ENCODE measurements at regions of chr10 and their contacts with region 1.

Region 1: GRCh38 chr10:84537447-84537931 is 209.1 kb downstream of the CCSER2 start:
- DNase-seq: peak; percentile 68
- H3K4me3 Mint-ChIP-seq: no peak overlapping the region
- H3K27ac Mint-ChIP-seq: no peak overlapping the region
- H3K4me1 Mint-ChIP-seq: peaks cover 25% of the 10 kb centered on the region
- H3K27me3 Mint-ChIP-seq: no peaks in the 10 kb centered on the region
- CTCF ChIP-seq: peak; percentile 70

Region 2: GRCh38 chr10:83917537-83918506 is 619.7 kb before region 1 on chr10:
- CTCF ChIA-PET with region 1: no interaction called
- POLR2A ChIA-PET with region 1: no interaction called
- intact Hi-C with region 1: no loop called
- DNase-seq: no peak
- H3K4me3 Mint-ChIP-seq: no peak overlapping the region
- H3K27ac Mint-ChIP-seq: no peak overlapping the region
- H3K4me1 Mint-ChIP-seq: no peaks in the 10 kb centered on the region
- H3K27me3 Mint-ChIP-seq: no peaks in the 10 kb centered on the region
- CTCF ChIP-seq: no peak

Region 3: GRCh38 chr10:84352251-84352842 is 185.1 kb before region 1 on chr10:
- CTCF ChIA-PET with region 1: interaction called, 40 read pairs
- POLR2A ChIA-PET with region 1: interaction called, 3 read pairs
- intact Hi-C with region 1: loop called (anchors 1 kb)
- DNase-seq: peak; percentile 77
- H3K4me3 Mint-ChIP-seq: no peak overlapping the region
- H3K27ac Mint-ChIP-seq: no peak overlapping the region
- H3K4me1 Mint-ChIP-seq: peaks cover 32% of the 10 kb centered on the region
- H3K27me3 Mint-ChIP-seq: no peaks in the 10 kb centered on the region
- CTCF ChIP-seq: peak; percentile 67

Region 4: GRCh38 chr10:84392181-84392580 is 145.3 kb before region 1 on chr10:
- CTCF ChIA-PET with region 1: interaction called, 17 read pairs
- POLR2A ChIA-PET with region 1: no interaction called
- intact Hi-C with region 1: no loop called
- DNase-seq: no peak
- H3K4me3 Mint-ChIP-seq: no peak overlapping the region
- H3K27ac Mint-ChIP-seq: no peak overlapping the region
- H3K4me1 Mint-ChIP-seq: peaks cover 16% of the 10 kb centered on the region
- H3K27me3 Mint-ChIP-seq: no peaks in the 10 kb centered on the region
- CTCF ChIP-seq: no peak

Region 5: GRCh38 chr10:84510121-84510520 is 27.4 kb before region 1 on chr10:
- CTCF ChIA-PET with region 1: interaction called, 10 read pairs
- POLR2A ChIA-PET with region 1: no interaction called
- intact Hi-C with region 1: no loop called
- DNase-seq: peak; percentile 8
- H3K4me3 Mint-ChIP-seq: no peak overlapping the region
- H3K27ac Mint-ChIP-seq: peak overlapping the region; percentile 4
- H3K4me1 Mint-ChIP-seq: peaks cover 10% of the 10 kb centered on the region
- H3K27me3 Mint-ChIP-seq: no peaks in the 10 kb centered on the region
- CTCF ChIP-seq: no peak

Region 6: GRCh38 chr10:84715911-84716310 is 178.4 kb after region 1 on chr10:
- CTCF ChIA-PET with region 1: interaction called, 5 read pairs
- POLR2A ChIA-PET with region 1: no interaction called
- intact Hi-C with region 1: loop called (anchors 1 kb)
- DNase-seq: peak; percentile 66
- H3K4me3 Mint-ChIP-seq: no peak overlapping the region
- H3K27ac Mint-ChIP-seq: no peak overlapping the region
- H3K4me1 Mint-ChIP-seq: no peaks in the 10 kb centered on the region
- H3K27me3 Mint-ChIP-seq: peaks cover 17% of the 10 kb centered on the region
- CTCF ChIP-seq: peak; percentile 35

Measured in MCF 10A (cell line).